ENCODE measurements at regions of chr7 and their contacts with region 1.

Region 1: GRCh38 chr7:74206589-74207120 is 3.2 kb upstream of the LAT2 start:
- DNase-seq: peak; percentile 91
- H3K4me3 ChIP-seq: peak overlapping the region in 3 of 4 donors; percentile 26 to 40 (median 40)
- H3K27ac ChIP-seq: peak overlapping the region in 1 of 4 donors; percentile 12
- H3K4me1 ChIP-seq: peaks cover 0 to 17% (median 14%) of the 10 kb centered on the region in 4 donors
- H3K27me3 ChIP-seq: no peaks in the 10 kb centered on the region
- CTCF ChIP-seq: peak; percentile 93 to 99 (median 96)
- EP300 ChIP-seq: no peak
- POLR2A ChIP-seq: no peak

Region 2: DNA sequence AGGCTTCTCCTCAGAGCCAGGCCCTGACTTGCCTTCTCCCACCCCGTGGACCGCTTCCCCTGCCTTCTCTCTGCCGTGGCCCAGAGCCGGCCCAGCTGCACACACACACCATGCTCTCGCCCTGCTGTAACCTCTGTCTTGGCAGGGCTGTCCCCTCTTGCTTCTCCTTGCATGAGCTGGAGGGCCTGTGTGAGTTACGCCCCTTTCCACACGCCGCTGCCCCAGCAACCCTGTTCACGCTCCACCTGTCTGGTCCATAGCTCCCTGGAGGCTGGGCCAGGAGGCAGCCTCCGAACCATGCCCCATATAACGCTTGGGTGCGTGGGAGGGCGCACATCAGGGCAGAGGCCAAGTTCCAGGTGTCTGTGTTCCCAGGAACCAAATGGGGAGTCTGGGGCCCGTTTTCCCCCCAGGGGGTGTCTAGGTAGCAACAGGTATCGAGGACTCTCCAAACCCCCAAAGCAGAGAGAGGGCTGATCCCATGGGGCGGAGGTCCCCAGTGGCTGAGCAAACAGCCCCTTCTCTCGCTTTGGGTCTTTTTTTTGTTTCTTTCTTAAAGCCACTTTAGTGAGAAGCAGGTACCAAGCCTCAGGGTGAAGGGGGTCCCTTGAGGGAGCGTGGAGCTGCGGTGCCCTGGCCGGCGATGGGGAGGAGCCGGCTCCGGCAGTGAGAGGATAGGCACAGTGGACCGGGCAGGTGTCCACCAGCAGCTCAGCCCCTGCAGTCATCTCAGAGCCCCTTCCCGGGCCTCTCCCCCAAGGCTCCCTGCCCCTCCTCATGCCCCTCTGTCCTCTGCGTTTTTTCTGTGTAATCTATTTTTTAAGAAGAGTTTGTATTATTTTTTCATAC is 85.0 kb before region 1 on chr7:
- intact Hi-C with region 1: no loop called
- DNase-seq: no peak
- H3K4me3 ChIP-seq: no peak overlapping the region
- H3K27ac ChIP-seq: no peak overlapping the region
- H3K4me1 ChIP-seq: no peaks in the 10 kb centered on the region
- H3K27me3 ChIP-seq: no peaks in the 10 kb centered on the region
- CTCF ChIP-seq: no peak
- EP300 ChIP-seq: no peak
- POLR2A ChIP-seq: no peak

Region 3: DNA sequence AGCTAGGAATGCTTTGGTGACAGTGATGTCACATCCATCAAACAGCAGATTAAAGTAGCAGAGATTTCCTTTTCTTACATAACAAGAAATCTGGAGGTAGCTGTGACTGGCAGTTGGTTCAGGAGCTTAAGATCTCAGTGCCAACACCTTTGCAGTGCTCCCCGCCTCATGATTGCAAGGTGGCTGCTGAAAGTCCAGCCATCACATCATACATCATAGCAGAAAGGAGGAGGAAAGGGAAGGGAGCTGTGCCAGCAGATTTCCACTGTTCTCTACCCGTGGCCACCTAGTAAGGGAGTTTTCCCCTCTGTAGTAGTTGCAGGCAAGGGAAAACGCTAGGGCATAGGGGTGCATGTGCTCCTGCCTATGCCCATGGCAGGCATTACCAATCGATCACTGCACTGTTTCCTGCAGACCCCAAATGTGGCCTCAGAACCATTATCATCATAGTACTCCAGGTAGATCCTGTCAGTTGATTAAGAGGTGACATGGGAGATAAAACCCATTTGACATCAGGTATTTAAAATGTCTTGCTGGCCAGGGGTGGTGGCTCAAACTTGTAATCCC is 189.2 kb after region 1 on chr7:
- intact Hi-C with region 1: loop called (anchors 1 kb)
- DNase-seq: peak; percentile 30
- H3K4me3 ChIP-seq: no peak overlapping the region
- H3K27ac ChIP-seq: no peak overlapping the region
- H3K4me1 ChIP-seq: peaks cover 0 to 15% (median 10%) of the 10 kb centered on the region in 4 donors
- H3K27me3 ChIP-seq: no peaks in the 10 kb centered on the region
- CTCF ChIP-seq: no peak
- EP300 ChIP-seq: no peak
- POLR2A ChIP-seq: no peak

Region 4: GRCh38 chr7:74401137-74401859 is 194.6 kb after region 1 on chr7:
- intact Hi-C with region 1: loop called (anchors 1 kb)
- DNase-seq: peak; percentile 83
- H3K4me3 ChIP-seq: no peak overlapping the region
- H3K27ac ChIP-seq: no peak overlapping the region
- H3K4me1 ChIP-seq: no peaks in the 10 kb centered on the region
- H3K27me3 ChIP-seq: no peaks in the 10 kb centered on the region
- CTCF ChIP-seq: peak; percentile 88 to 99 (median 90)
- EP300 ChIP-seq: no peak
- POLR2A ChIP-seq: no peak